Body of pancreas (tissue), 4 donors: ENCODE measurements at regions of chr1 and their contacts with region 1.

Region 1: GRCh38 chr1:54490361-54491248 is 57.4 kb upstream of the ACOT11 start:
- DNase-seq: peak in 3 of 4 donors; percentile 24 to 43 (median 32)
- ATAC-seq: no peak
- H3K4me3 ChIP-seq: no peak overlapping the region
- H3K27ac ChIP-seq: no peak overlapping the region
- H3K4me1 ChIP-seq: peaks cover 20% of the 10 kb centered on the region
- H3K27me3 ChIP-seq: no peaks in the 10 kb centered on the region
- CTCF ChIP-seq: no peak
- POLR2A ChIP-seq: no peak

Region 2: DNA sequence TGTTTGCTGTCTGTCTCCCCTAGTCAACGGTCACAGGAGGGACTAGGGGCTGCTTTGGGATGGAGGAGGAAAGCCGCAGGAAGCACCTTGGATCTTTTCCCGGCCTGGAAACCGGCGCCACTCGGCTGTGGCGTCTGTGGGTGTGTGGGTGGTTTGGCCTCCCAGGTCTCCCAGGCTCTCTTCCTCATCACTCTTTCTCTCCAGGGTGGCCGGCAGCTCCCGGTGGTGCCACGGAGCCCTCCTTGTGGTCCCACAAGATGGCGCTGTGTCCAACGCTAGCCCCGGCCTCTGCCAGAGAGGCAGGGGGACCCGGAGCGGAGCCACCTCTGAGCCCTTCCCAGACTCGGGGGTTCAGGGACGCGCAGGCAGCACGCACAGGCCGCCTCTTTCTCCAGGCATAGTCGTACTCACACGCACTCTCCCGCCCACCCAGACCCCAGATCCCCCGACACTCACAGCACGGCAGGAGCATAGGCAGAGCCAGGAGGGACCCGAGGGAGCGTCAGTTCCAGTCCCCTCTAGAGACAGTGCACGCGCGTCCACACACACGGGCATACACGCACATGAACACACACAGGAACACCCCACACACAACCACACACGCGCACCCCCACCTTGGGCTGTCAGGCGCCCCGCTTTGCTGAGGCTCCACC is 369.0 kb before region 1 on chr1:
- intact Hi-C with region 1: loop called (anchors 5 kb)
- DNase-seq: peak; percentile 81 to 87 (median 85)
- ATAC-seq: peak; percentile 70
- H3K4me3 ChIP-seq: no peak overlapping the region
- H3K27ac ChIP-seq: peak overlapping the region in 3 of 4 donors; percentile 1 to 72 (median 46)
- H3K4me1 ChIP-seq: peaks cover 45% of the 10 kb centered on the region
- H3K27me3 ChIP-seq: no peaks in the 10 kb centered on the region
- CTCF ChIP-seq: peak; percentile 71 to 88 (median 81)
- POLR2A ChIP-seq: peak in 2 of 3 donors; percentile 43 to 61

Region 3: DNA sequence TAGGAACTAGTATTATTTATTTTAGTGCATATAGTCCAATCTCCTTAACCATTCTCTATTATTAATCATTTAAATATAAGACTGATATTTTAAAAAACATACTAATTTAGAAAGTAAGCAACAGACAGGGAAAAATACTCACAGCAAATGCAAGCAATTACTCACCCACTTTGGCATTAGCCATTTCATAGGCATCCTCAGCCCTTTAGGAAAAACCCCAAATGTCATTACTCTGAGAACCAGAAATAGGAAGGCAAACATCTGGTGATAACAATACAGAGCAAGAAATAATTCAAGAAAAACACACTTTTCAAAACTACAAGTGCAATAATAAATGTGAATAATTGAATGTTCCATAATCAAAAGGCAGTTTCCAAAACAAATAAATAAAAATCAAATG is 1543.6 kb after region 1 on chr1:
- intact Hi-C with region 1: no loop called
- DNase-seq: no peak
- ATAC-seq: no peak
- H3K4me3 ChIP-seq: no peak overlapping the region
- H3K27ac ChIP-seq: no peak overlapping the region
- H3K4me1 ChIP-seq: no peaks in the 10 kb centered on the region
- H3K27me3 ChIP-seq: no peaks in the 10 kb centered on the region
- CTCF ChIP-seq: no peak
- POLR2A ChIP-seq: no peak